Heart right ventricle (tissue), 16 donors: ENCODE measurements at regions of chr9 and their contacts with region 1.

Region 1: DNA sequence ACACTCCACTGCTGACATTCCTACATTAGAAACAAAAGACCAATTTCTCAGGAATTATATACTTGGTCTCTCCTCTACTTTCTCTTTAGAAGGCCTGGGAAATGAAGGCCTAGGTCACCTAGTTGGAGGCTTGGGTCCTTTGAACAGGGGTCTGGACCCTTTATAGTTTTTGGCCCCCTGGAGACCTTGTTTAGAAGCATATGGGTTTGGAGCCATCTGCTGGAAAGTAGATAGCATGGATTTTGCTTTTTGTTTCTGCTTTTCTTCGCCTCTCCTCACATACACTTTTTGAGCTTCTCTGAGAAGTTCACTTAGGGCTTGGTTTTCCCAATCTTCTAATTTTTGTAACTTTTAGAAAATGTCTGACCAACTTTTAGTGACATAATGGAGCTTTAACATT is 67.1 kb upstream of the CDK20 start:
- DNase-seq: no peak
- ATAC-seq: no peak
- H3K4me3 ChIP-seq: no peak overlapping the region
- H3K27ac ChIP-seq: no peak overlapping the region
- H3K4me1 ChIP-seq: no peaks in the 10 kb centered on the region
- H3K27me3 ChIP-seq: no peaks in the 10 kb centered on the region
- CTCF ChIP-seq: peak in 8 of 9 donors; percentile 6 to 50 (median 34)

Region 2: DNA sequence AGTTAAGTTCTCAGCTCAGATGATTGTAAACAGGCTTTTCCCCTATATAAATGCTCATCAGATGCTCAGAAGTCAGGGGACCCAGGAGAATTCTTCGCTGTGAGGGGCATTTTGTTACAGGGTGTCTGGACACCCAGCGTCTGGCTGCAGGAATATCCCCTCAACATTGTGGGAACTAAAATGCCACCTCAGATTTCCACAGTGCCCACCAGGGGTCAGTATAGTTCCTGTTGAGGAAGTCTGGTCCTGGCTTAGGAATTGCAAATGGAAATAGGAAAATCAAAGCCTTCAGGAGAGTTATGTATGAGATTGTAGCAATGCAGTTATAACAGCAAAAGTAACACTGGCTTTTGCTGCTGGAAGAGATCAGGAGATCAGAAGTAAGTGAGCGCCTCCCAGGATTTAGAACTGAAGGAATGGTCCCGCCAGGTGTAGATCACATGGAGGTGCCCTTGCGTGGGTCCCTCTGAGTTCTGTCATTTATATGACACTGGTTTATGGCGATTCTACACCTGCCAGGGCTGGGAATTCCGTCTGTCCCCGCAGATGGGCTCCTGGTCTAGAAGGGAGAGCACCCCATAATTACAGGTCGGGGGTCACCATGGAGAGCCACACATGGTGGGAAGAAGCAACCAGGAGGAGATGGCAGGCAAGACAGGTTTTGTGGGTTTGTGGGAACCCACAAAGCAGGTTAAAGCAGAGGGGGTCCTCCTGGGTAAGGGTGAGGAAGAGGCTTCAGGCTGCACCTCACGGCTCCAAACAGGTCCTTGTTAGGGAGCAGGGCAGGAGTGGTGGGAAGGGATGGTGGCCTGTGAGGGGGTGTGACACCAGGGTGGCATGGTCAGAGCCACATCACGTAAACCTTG is 362.6 kb before region 1 on chr9:
- intact Hi-C with region 1: loop called in 8 of 10 experiments (anchors 5 to 10 kb)
- DNase-seq: peak in 1 of 2 donors; percentile 67
- ATAC-seq: peak in 6 of 8 donors; percentile 31 to 54 (median 43)
- H3K4me3 ChIP-seq: no peak overlapping the region
- H3K27ac ChIP-seq: no peak overlapping the region
- H3K4me1 ChIP-seq: peaks cover 0 to 7% (median 0%) of the 10 kb centered on the region in 9 donors
- H3K27me3 ChIP-seq: no peaks in the 10 kb centered on the region
- CTCF ChIP-seq: peak; percentile 51 to 87 (median 82)

Region 3: GRCh38 chr9:87684627-87685219 is 356.7 kb before region 1 on chr9:
- intact Hi-C with region 1: loop called in 8 of 10 experiments (anchors 5 to 10 kb)
- DNase-seq: peak in 1 of 2 donors; percentile 24
- ATAC-seq: peak in 6 of 8 donors; percentile 9 to 76 (median 41)
- H3K4me3 ChIP-seq: no peak overlapping the region
- H3K27ac ChIP-seq: peak overlapping the region in 1 of 10 donors; percentile 79
- H3K4me1 ChIP-seq: peaks cover 0 to 27% (median 0%) of the 10 kb centered on the region in 9 donors
- H3K27me3 ChIP-seq: no peaks in the 10 kb centered on the region
- CTCF ChIP-seq: peak; percentile 57 to 83 (median 73)